Calu3 (cell line): ENCODE measurements at regions of chr10 and their contacts with region 1.

Region 1: DNA sequence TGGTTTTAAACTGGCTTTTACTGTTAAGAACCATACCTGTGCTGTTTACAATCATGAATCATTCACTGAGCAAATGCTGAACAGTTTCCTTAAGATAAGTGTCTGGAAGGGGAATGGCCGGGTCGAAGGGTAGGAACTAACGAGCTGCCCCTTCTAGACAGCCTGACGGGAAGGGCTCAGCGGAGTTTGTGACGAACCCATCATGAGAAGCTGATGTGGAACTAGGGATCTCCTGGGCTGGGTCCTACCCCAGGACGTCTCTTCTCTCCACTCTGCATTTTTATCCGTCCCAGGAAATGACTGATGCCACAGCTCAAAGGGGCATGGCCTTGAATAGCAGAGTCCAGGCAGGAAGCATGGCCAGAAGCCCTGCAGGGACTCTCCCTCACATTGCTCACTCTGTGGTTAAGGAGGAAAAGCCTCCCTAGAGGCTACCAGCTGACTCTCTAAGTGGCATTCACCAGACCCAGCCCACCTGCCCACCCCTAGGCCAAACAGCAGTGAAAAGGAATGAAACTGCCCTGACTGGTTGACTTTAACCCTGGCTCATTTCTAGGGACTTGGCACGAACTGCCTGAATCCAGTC is 112.0 kb downstream of the PFKFB3 start:
- DNase-seq: peak; percentile 79
- H3K4me3 Mint-ChIP-seq: peak overlapping the region; percentile 66
- H3K27ac Mint-ChIP-seq: peak overlapping the region; percentile 95
- H3K4me1 Mint-ChIP-seq: peaks cover 59% of the 10 kb centered on the region
- H3K27me3 Mint-ChIP-seq: no peaks in the 10 kb centered on the region
- CTCF ChIP-seq: no peak

Region 2: DNA sequence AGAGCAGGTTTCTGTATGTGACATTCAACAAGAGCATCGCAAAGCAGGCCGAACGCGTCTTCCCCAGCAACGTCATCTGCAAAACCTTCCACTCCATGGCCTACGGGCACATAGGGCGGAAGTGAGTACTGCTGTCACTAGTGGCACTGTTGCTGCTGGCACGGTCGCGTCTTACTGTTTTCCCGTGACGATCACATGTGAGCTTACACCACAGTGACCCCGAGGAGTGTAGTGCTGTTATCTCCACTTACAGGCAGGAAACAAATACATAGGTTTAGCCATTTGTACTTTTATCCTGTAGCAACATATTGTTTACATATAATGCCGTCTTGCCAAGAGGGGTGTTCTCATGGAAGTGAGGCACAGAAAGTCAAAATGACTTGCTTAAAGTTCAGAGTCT is 399.3 kb before region 1 on chr10:
- CTCF ChIA-PET with region 1: no interaction called
- intact Hi-C with region 1: no loop called
- DNase-seq: no peak
- H3K4me3 Mint-ChIP-seq: no peak overlapping the region
- H3K27ac Mint-ChIP-seq: no peak overlapping the region
- H3K4me1 Mint-ChIP-seq: no peaks in the 10 kb centered on the region
- H3K27me3 Mint-ChIP-seq: no peaks in the 10 kb centered on the region
- CTCF ChIP-seq: no peak

Region 3: DNA sequence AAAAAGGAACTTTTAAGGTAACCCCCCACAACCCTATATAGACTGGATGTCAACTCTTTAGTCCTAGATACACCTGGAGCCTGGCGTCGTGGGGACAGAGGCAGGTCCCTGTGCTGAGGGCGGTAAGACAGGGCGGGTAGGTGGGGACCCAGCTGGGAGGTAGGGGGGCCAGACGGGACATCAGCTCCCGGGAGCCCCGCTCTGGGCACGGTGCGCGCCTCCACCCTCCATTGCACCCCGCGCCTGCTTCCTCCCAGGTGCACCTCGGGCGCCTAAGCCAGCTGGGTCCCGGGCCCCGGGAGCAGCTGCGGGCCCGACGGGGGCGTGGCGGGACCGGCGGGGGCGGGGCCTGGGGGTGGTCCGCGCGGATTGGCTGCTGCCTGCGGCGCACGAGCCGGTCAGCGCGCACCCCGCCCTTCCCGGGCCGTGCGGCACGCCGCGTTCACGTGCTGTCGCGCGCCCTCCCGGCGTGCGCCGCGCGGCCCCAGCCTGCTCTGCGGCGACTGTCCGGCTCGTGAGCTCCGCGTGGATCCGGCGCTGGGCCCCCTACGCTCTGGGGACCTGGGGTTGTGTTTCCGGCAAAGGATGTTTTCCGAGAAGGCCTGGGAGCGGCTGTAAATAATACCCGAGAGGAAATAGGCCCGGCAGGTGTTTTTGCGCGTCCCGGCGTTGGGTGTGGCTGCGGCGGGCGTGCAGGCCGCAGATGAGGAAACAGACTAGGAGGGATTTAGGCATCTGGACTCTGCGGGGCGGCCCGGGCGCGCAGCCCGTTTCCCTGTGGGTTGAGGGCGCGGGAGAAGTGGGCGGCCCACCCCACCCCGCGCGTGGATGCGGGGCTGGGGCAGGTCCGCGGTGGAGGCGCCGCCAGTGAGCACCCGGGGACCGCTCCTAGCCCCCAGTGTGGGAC is 151.1 kb before region 1 on chr10:
- CTCF ChIA-PET with region 1: no interaction called
- intact Hi-C with region 1: no loop called
- DNase-seq: peak; percentile 95
- H3K4me3 Mint-ChIP-seq: peak overlapping the region; percentile 94
- H3K27ac Mint-ChIP-seq: peak overlapping the region; percentile 91
- H3K4me1 Mint-ChIP-seq: peaks cover 12% of the 10 kb centered on the region
- H3K27me3 Mint-ChIP-seq: no peaks in the 10 kb centered on the region
- CTCF ChIP-seq: no peak

Region 4: DNA sequence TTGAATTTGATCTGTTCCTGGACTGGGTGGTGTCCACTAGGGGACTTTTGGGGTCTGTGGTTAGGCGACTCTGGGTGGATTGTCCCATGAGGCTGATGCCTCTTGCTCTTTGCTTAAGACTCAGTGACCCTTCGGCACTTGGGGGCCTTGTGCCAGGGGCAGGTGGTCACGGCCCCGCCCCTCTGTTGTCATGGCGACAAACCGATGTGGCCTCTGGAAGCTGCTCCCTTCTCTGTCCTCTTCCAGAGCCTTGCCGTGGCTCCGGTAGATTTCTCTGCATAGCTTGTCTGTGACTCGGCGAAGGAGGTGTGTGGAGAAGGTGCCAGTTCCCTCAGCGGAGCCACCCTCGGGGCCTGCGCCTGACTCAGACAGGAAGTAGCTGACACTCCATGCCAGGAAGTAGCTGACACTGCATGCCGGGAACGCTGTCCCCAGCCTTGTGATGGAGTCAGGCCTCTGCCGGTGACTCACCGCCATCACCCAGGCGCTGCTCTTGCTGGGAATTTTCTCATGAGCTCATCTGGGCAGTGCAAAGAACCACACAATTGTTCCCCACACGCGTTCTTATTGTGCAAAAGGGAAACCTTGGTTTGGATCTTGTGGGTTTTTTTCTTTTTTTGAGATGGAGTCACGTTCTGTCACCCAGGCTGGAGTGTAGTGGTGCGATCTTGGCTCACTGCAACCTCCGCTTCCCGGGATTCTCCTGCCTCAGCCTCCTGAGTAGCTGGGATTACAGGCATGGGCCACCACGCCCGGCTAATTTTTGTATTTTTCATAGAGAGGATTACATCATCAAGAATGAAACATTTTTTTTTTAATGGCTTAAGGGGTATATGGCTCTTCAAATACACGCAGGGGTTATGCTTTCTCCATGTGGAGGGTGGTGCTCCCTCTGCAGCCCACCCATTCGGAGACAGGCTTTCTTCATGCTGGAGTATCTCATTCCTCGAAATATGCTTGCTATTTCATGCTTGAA is 39.4 kb before region 1 on chr10:
- CTCF ChIA-PET with region 1: interaction called, 3 read pairs
- intact Hi-C with region 1: loop called (anchors 1 kb)
- DNase-seq: peak; percentile 95
- H3K4me3 Mint-ChIP-seq: peak overlapping the region; percentile 65
- H3K27ac Mint-ChIP-seq: peak overlapping the region; percentile 99
- H3K4me1 Mint-ChIP-seq: peaks cover 58% of the 10 kb centered on the region
- H3K27me3 Mint-ChIP-seq: no peaks in the 10 kb centered on the region
- CTCF ChIP-seq: no peak

Region 5: GRCh38 chr10:6385396-6386062 is 70.8 kb after region 1 on chr10:
- CTCF ChIA-PET with region 1: interaction called, 8 read pairs
- intact Hi-C with region 1: loop called (anchors 1 kb)
- DNase-seq: no peak
- H3K4me3 Mint-ChIP-seq: no peak overlapping the region
- H3K27ac Mint-ChIP-seq: peak overlapping the region; percentile 45
- H3K4me1 Mint-ChIP-seq: peaks cover 72% of the 10 kb centered on the region
- H3K27me3 Mint-ChIP-seq: no peaks in the 10 kb centered on the region
- CTCF ChIP-seq: no peak